ENCODE measurements at regions of chr3 and their contacts with region 1.

Region 1: DNA sequence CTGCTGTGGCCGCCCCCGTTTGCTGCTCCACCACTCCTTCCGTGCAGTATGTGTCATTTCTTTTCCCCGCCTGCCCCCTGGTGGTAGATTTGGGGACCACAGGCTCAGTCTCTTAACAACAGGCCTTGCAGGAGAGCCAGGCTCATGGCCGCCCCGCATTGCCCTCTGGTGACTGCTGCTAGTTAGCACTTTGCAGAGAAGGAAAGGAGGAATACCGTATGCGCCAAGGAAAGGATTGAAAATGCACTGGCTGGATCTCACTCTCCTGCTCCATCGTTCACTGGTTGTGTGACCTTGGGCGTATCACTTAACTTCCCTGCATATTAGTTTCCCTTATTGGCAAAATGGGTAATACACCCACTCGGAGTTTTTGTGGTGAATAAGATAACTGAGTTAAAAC is 39.3 kb upstream of the PXYLP1 start:
- DNase-seq: peak; percentile 89
- ATAC-seq: peak; percentile 98
- H3K4me3 ChIP-seq: no peak overlapping the region
- H3K27ac ChIP-seq: no peak overlapping the region
- H3K4me1 ChIP-seq: no peaks in the 10 kb centered on the region
- H3K27me3 ChIP-seq: peaks cover 19% of the 10 kb centered on the region; the same call in 1 of the 2 replicates
- CTCF ChIP-seq: peak; percentile 92 to 99 (median 99)
- POLR2A ChIP-seq: no peak
- RAD21 ChIP-seq: peak; percentile 97

Region 2: GRCh38 chr3:140128631-140129030 is 1063.7 kb before region 1 on chr3:
- CTCF ChIA-PET with region 1: no interaction called
- POLR2A ChIA-PET with region 1: no interaction called
- RAD21 ChIA-PET with region 1: interaction called in 1 of 2 experiments, 6 read pairs
- intact Hi-C with region 1: loop called (anchors 5 kb)
- DNase-seq: peak; percentile 1
- ATAC-seq: peak; percentile 97
- H3K4me3 ChIP-seq: no peak overlapping the region
- H3K27ac ChIP-seq: no peak overlapping the region
- H3K4me1 ChIP-seq: no peaks in the 10 kb centered on the region
- H3K27me3 ChIP-seq: peaks cover 30% of the 10 kb centered on the region
- CTCF ChIP-seq: peak; percentile 54 to 74 (median 68); a peak in 5 of 6 replicates
- POLR2A ChIP-seq: no peak
- RAD21 ChIP-seq: peak; percentile 50

Region 3: GRCh38 chr3:140809316-140809715 is 383.0 kb before region 1 on chr3:
- CTCF ChIA-PET with region 1: no interaction called
- POLR2A ChIA-PET with region 1: no interaction called
- RAD21 ChIA-PET with region 1: no interaction called
- intact Hi-C with region 1: no loop called
- DNase-seq: no peak
- ATAC-seq: no peak
- H3K4me3 ChIP-seq: no peak overlapping the region
- H3K27ac ChIP-seq: no peak overlapping the region
- H3K4me1 ChIP-seq: no peaks in the 10 kb centered on the region
- H3K27me3 ChIP-seq: peaks cover 4% of the 10 kb centered on the region; the same call in 1 of the 2 replicates
- CTCF ChIP-seq: no peak
- POLR2A ChIP-seq: no peak
- RAD21 ChIP-seq: no peak

Region 4: GRCh38 chr3:140898340-140899180 is 293.8 kb before region 1 on chr3:
- CTCF ChIA-PET with region 1: interaction called, 3 read pairs
- POLR2A ChIA-PET with region 1: no interaction called
- RAD21 ChIA-PET with region 1: no interaction called
- intact Hi-C with region 1: loop called (anchors 1 kb)
- DNase-seq: peak; percentile 46
- ATAC-seq: peak; percentile 95
- H3K4me3 ChIP-seq: no peak overlapping the region
- H3K27ac ChIP-seq: no peak overlapping the region
- H3K4me1 ChIP-seq: no peaks in the 10 kb centered on the region
- H3K27me3 ChIP-seq: peaks cover 16% of the 10 kb centered on the region
- CTCF ChIP-seq: peak; percentile 52 to 92 (median 61)
- POLR2A ChIP-seq: no peak
- RAD21 ChIP-seq: peak; percentile 73

Region 5: DNA sequence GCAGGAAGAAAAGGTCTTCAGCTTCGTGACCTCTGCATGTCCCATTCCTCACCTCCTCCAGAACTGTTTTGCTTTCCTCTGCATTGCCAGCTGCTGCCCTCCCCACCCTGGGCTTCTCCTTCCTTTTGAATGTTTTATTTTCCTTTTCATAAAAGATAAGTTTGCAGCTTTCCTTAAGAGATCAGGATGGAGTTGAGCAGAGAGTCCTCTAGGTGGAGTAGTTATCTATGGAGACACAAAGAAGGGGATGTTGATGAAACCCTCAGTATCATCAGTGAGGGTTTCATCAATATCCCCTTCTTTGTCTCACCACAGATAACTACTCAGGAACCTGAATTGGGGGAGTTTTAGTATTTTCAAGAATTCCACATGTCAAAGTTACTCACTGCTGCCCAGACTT is 269.7 kb before region 1 on chr3:
- CTCF ChIA-PET with region 1: no interaction called
- POLR2A ChIA-PET with region 1: no interaction called
- RAD21 ChIA-PET with region 1: no interaction called
- intact Hi-C with region 1: loop called (anchors 2 kb)
- DNase-seq: no peak
- ATAC-seq: peak; percentile 79
- H3K4me3 ChIP-seq: no peak overlapping the region
- H3K27ac ChIP-seq: no peak overlapping the region
- H3K4me1 ChIP-seq: no peaks in the 10 kb centered on the region
- H3K27me3 ChIP-seq: peaks cover 1% of the 10 kb centered on the region; the same call in 1 of the 2 replicates
- CTCF ChIP-seq: peak; percentile 44 to 50 (median 48); a peak in 5 of 6 replicates
- POLR2A ChIP-seq: no peak
- RAD21 ChIP-seq: peak; percentile 52

Region 6: DNA sequence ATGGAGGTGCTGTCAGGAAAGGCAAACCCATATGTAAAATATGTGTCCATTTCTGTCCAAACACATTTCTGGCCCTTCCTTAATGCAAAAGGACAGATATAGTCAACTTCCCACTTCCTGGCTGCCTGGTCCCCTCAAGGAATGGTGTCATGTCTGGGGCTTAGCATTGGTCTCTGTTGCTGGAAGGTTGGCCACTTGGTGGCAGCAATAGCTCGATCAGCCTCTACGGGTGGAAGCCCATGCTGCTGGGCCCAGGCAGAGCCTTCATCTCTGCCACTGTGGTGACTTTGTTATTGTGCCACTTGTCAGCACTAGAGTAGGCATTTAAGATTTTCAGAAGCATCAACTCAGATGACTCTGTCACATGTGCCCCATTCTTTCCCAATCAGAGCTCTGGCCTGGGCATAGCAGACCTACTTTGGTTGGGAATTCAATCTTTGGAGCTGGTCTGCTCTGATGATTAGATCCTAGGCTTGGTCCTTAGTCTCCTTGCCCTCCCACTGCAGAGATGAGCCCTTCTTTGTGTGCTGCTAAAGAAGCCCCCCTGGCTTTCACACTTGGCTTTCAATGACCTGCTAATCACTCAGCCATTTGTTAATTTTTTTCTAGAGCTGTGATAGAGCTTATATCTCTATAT is 192.2 kb before region 1 on chr3:
- CTCF ChIA-PET with region 1: interaction called, 38 read pairs
- POLR2A ChIA-PET with region 1: no interaction called
- RAD21 ChIA-PET with region 1: interaction called, 4 to 5 read pairs
- intact Hi-C with region 1: loop called (anchors 1 kb)
- DNase-seq: peak; percentile 54
- ATAC-seq: peak; percentile 99
- H3K4me3 ChIP-seq: no peak overlapping the region
- H3K27ac ChIP-seq: no peak overlapping the region
- H3K4me1 ChIP-seq: no peaks in the 10 kb centered on the region
- H3K27me3 ChIP-seq: no peaks in the 10 kb centered on the region
- CTCF ChIP-seq: peak; percentile 76 to 90 (median 81)
- POLR2A ChIP-seq: no peak
- RAD21 ChIP-seq: peak; percentile 88

Region 7: DNA sequence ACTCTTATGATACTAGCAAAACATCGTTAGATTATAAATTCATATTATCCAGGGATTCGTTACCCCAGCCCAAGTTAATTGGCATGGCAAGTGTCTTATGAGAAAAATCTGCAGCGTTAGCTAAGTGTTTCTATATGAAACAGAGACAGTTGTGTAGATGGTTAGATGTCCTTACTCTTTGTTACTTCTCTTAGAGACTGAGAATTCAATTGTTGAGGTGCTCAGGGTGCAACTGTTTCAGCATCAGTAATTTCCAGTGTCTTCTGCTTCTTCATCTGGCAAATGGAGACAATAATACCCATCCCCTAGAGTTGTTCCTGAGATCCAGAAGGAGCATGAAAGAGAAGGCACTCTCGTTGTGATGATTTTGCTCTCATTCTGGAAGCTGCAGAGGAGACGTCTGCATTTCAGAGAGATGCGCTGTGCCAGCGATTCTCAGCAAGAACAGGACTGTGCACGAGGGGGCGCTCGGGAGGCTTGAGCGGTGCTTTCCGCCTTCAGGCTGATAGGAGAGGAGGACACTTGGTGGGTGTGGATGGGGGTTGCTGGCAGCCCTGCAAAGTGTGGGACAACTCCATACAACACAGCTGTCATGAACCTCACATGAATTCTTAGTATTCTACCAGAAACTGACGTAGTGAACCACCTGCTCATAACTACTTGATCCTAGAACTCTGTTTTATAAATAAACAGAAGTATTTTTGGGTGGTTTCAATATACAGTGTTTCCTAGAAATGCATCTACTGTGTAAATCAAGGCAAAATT is 180.9 kb before region 1 on chr3:
- CTCF ChIA-PET with region 1: interaction called, 6 read pairs
- POLR2A ChIA-PET with region 1: no interaction called
- RAD21 ChIA-PET with region 1: no interaction called
- intact Hi-C with region 1: loop called (anchors 1 kb)
- DNase-seq: peak; percentile 51
- ATAC-seq: peak; percentile 99
- H3K4me3 ChIP-seq: no peak overlapping the region
- H3K27ac ChIP-seq: no peak overlapping the region
- H3K4me1 ChIP-seq: peaks cover 0 to 7% of the 10 kb centered on the region in 2 experiments; a peak in 1 of 4 replicates
- H3K27me3 ChIP-seq: no peaks in the 10 kb centered on the region
- CTCF ChIP-seq: peak; percentile 86 to 92 (median 91)
- POLR2A ChIP-seq: no peak
- RAD21 ChIP-seq: peak; percentile 72

Region 8: GRCh38 chr3:141174674-141175073 is 17.7 kb before region 1 on chr3:
- CTCF ChIA-PET with region 1: no interaction called
- POLR2A ChIA-PET with region 1: no interaction called
- RAD21 ChIA-PET with region 1: no interaction called
- intact Hi-C with region 1: no loop called
- DNase-seq: no peak
- ATAC-seq: no peak
- H3K4me3 ChIP-seq: no peak overlapping the region
- H3K27ac ChIP-seq: no peak overlapping the region
- H3K4me1 ChIP-seq: no peaks in the 10 kb centered on the region
- H3K27me3 ChIP-seq: no peaks in the 10 kb centered on the region; the same call in 1 of the 2 replicates
- CTCF ChIP-seq: no peak
- POLR2A ChIP-seq: no peak
- RAD21 ChIP-seq: no peak

Region 9: DNA sequence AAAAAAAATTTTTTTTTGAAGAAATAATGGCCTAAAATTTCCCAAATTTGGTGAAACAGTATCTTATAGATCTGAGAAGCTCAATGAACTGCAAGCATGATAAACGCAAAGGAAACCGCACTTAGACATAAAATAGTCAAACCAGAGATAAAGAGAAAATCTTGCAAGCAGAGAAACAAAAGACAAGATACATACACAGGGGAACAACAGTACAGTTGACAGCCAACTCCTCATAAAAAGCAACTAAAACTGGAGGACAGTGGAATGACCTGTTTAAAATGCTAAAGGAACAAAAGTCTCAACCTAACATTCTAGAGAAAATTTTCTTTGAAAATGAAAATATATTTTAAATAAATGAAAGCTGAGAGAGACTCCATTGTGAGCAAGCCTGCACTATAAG is 402.0 kb after region 1 on chr3:
- CTCF ChIA-PET with region 1: no interaction called
- POLR2A ChIA-PET with region 1: no interaction called
- RAD21 ChIA-PET with region 1: no interaction called
- intact Hi-C with region 1: no loop called
- DNase-seq: no peak
- ATAC-seq: no peak
- H3K4me3 ChIP-seq: no peak overlapping the region
- H3K27ac ChIP-seq: no peak overlapping the region
- H3K4me1 ChIP-seq: no peaks in the 10 kb centered on the region
- H3K27me3 ChIP-seq: no peaks in the 10 kb centered on the region
- CTCF ChIP-seq: no peak
- POLR2A ChIP-seq: no peak
- RAD21 ChIP-seq: no peak

Region 10: DNA sequence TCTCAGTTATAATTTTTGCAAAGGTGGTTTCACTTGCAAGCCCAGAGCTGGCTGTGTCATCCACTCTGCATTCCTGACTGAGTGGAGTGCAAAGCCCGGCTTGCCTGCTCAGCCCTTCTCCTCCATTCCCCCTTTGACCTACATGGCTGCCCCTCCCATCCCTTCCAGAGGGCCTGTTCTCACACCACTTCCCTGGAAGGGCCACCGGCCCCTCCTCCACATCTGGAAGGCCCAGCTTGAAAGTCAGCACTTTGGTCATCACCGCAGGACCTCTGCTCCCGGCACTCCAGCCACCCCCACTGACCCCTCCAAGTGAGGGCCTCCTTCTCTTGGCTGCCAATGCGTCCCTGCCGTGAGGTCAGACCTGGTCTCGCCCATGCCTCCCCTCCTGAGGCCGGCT is 471.6 kb after region 1 on chr3:
- CTCF ChIA-PET with region 1: no interaction called
- POLR2A ChIA-PET with region 1: no interaction called
- RAD21 ChIA-PET with region 1: no interaction called
- intact Hi-C with region 1: no loop called
- DNase-seq: no peak
- ATAC-seq: no peak
- H3K4me3 ChIP-seq: no peak overlapping the region
- H3K27ac ChIP-seq: no peak overlapping the region
- H3K4me1 ChIP-seq: peaks cover 4 to 12% of the 10 kb centered on the region in 2 experiments; a peak in 3 of 4 replicates
- H3K27me3 ChIP-seq: no peaks in the 10 kb centered on the region
- CTCF ChIP-seq: no peak
- POLR2A ChIP-seq: no peak
- RAD21 ChIP-seq: no peak

Measured in HCT116 (cell line).